A549 (cell line): ENCODE measurements at regions of chr2 and their contacts with region 1.

Region 1: GRCh38 chr2:233832869-233833311 is 21.4 kb downstream of the HJURP start:
- DNase-seq: peak; percentile 93 to 97
- ATAC-seq: peak; percentile 83 to 92
- H3K4me3 ChIP-seq: no peak overlapping the region
- H3K27ac ChIP-seq: peak overlapping the region; percentile 91 to 93
- H3K4me1 ChIP-seq: peaks cover 73% of the 10 kb centered on the region
- CTCF ChIP-seq: peak; percentile 89
- EP300 ChIP-seq: peak; percentile 19 to 53; a peak in 2 of 5 replicates
- POLR2A ChIP-seq: no peak
- RAD21 ChIP-seq: peak; percentile 92 to 99

Region 2: GRCh38 chr2:233404222-233404621 is 428.7 kb before region 1 on chr2:
- CTCF ChIA-PET with region 1: interaction called, 20 read pairs
- POLR2A ChIA-PET with region 1: interaction called, 3 read pairs
- DNase-seq: peak; percentile 60 to 77
- ATAC-seq: peak; percentile 45 to 71; a peak in 3 of 6 replicates
- H3K4me3 ChIP-seq: no peak overlapping the region
- H3K27ac ChIP-seq: peak overlapping the region; percentile 64 to 82
- H3K4me1 ChIP-seq: peaks cover 74% of the 10 kb centered on the region
- CTCF ChIP-seq: peak; percentile 76
- EP300 ChIP-seq: no peak
- POLR2A ChIP-seq: no peak
- RAD21 ChIP-seq: peak; percentile 80 to 88

Region 3: DNA sequence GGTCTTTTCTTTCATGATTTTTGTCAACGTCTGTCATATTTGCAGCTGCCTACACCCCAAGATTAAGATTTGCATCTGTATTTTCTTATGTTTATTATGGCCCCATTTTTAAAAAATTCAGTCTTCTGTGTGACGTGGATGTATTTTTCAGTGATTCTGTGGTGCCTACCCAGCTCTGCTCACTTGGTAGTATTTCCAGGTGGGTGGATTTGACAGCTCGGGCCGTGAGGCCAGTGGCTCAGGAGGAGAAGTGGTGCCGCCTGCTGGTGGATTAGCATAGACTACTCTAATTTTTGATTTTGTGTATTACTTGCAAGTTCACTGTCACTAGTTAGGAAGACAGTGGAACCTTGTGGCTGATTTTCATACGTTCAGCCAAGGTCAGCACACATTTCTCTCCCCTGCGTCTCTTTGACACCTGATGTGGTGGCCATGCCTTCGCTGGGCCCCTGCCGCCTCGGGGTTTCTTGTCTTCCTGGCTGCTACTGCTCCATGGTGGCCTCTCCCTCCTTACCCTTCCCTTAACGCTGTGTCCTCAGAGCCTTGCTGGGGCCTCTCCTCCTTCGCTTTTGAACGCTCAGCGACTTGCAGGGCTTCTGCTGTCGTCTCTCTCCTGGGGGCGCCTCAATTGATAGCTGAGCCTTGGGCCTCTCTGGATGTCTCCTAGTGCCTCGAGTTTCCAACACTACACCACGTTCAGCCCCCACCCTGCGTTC is 389.3 kb before region 1 on chr2:
- CTCF ChIA-PET with region 1: interaction called, 83 read pairs
- POLR2A ChIA-PET with region 1: interaction called, 11 read pairs
- DNase-seq: peak; percentile 88
- ATAC-seq: peak; percentile 55 to 61; a peak in 5 of 6 replicates
- H3K4me3 ChIP-seq: no peak overlapping the region
- H3K27ac ChIP-seq: peak overlapping the region; percentile 84 to 94
- H3K4me1 ChIP-seq: peaks cover 63% of the 10 kb centered on the region
- CTCF ChIP-seq: peak; percentile 89
- EP300 ChIP-seq: no peak
- POLR2A ChIP-seq: no peak
- RAD21 ChIP-seq: peak; percentile 92 to 95

Region 4: DNA sequence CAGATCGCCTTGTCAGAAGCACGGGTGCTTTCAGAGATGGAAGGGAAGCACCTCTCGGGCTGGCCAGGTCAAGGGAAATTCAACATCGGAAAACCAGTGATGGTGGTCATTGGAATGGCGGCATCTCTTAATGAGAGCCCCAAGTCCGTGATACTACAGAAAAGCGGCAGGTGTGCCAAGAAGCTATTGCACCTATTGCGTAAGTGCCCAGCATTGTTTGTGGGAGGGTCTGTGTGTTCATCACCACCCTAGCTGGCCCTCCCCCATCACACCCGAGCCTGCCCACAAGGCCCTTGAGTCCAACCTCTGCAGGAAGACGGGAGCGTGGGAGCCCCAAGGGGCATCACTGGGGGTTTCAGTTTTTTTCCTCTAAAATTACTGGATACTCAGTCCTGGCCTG is 377.9 kb before region 1 on chr2:
- CTCF ChIA-PET with region 1: interaction called, 13 read pairs
- POLR2A ChIA-PET with region 1: interaction called, 5 read pairs
- DNase-seq: no peak
- ATAC-seq: no peak
- H3K4me3 ChIP-seq: no peak overlapping the region
- H3K27ac ChIP-seq: peak overlapping the region; percentile 26 to 94; a peak in 5 of 6 replicates
- H3K4me1 ChIP-seq: peaks cover 68% of the 10 kb centered on the region
- CTCF ChIP-seq: no peak
- EP300 ChIP-seq: no peak
- POLR2A ChIP-seq: no peak
- RAD21 ChIP-seq: no peak

Region 5: DNA sequence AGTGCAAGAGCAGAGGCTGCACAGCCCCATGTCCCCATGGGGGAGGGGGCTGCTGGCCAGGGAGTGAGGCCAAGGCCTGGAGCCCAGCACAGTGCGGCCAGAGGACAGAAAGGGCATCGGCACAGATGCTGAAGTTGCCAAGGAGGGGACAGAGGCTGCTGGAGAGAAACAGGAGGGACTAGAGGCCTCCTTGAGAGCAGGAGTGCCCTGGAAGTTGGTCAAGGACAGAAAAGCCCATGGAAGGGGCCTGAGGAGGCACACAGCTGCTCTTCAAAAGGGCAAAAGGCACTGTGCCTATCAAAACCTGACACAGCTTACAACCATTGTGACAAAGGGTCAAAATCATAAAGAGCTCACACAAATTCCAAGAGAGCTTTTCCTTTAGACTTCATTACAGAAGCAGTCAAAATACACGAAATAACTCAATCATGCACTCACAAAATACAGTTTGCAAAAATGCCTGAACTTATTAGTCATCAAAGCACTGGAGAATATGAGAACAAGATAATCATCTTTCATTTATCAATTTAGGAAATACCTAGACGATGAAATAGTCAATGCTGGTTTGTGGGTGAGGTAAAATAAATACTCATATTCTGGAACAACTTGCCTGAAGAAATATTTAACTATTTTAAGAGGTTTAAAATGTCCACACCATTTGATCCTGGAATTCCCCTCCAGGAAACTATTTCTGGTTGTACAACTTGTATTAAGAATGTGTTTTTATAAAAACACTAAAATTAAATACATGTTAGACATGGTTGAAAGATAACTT is 345.9 kb before region 1 on chr2:
- CTCF ChIA-PET with region 1: interaction called, 13 read pairs
- POLR2A ChIA-PET with region 1: no interaction called
- DNase-seq: peak; percentile 70 to 93
- ATAC-seq: peak; percentile 69 to 84
- H3K4me3 ChIP-seq: no peak overlapping the region
- H3K27ac ChIP-seq: peak overlapping the region; percentile 98
- H3K4me1 ChIP-seq: peaks cover 48% of the 10 kb centered on the region
- CTCF ChIP-seq: no peak
- EP300 ChIP-seq: peak; percentile 99 to 100
- POLR2A ChIP-seq: no peak
- RAD21 ChIP-seq: peak in 1 of 2 experiments; percentile 69; a peak in 4 of 5 replicates

Region 6: GRCh38 chr2:233711312-233712008 is 121.4 kb before region 1 on chr2:
- CTCF ChIA-PET with region 1: interaction called, 16 read pairs
- POLR2A ChIA-PET with region 1: interaction called, 7 read pairs
- DNase-seq: peak; percentile 54 to 90
- ATAC-seq: peak; percentile 83 to 89
- H3K4me3 ChIP-seq: no peak overlapping the region
- H3K27ac ChIP-seq: peak overlapping the region; percentile 98 to 100
- H3K4me1 ChIP-seq: peaks cover 52% of the 10 kb centered on the region
- CTCF ChIP-seq: peak; percentile 84
- EP300 ChIP-seq: no peak
- POLR2A ChIP-seq: no peak
- RAD21 ChIP-seq: peak; percentile 92 to 95